ENCODE measurements at regions of chr12 and their contacts with region 1.

Region 1: GRCh38 chr12:104462931-104463339 is 6.2 kb downstream of the CHST11 start:
- DNase-seq: peak in 1 of 2 donors; percentile 80
- ATAC-seq: peak; percentile 41 to 67 (median 48)
- H3K4me3 ChIP-seq: no peak overlapping the region
- H3K4me3 Mint-ChIP-seq: peak overlapping the region; percentile 78
- H3K27ac ChIP-seq: peak overlapping the region; percentile 64
- H3K27ac Mint-ChIP-seq: peak overlapping the region; percentile 91 to 93
- H3K4me1 ChIP-seq: peaks cover 70% of the 10 kb centered on the region
- H3K4me1 Mint-ChIP-seq: peaks cover 82% of the 10 kb centered on the region in 2 donors
- H3K27me3 ChIP-seq: no peaks in the 10 kb centered on the region
- H3K27me3 Mint-ChIP-seq: no peaks in the 10 kb centered on the region
- CTCF ChIP-seq: no peak

Region 2: DNA sequence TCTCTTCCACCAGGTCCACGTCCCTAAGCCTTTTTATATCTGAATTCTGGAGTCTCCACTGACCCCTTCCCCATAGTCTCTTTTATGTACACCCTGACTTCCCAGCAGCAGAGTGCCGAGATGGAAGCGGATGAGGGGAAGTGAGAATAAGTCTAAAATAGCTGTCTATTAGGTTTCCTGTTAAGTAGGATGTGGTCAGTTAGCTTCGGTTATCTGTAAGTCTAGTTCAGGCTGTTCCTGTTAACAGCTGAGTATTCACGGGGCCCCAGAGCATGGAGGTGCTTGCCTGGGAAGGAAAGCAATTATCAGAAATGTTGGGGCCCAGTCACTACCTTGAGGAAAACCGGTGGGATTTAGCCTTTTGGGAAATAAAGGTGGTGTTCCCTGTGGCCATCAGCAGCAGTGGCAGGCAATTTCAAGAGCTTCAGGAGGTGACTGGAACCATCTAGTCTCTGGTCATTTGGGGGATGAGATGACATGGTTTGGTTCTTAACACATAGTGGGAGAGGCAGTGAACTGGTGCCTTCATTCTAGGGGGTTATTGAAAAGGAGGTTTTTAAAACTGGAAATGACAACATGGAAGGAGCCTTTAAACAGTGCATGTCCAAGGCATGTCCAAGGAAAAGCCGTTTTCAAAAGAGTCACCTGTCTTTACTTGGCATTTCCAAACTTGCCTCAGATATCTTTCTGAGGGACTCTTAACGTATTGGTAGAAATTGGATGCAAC is 15.6 kb after region 1 on chr12:
- intact Hi-C with region 1: loop called (anchors 2 kb)
- DNase-seq: peak; percentile 35 to 75
- ATAC-seq: peak; percentile 83 to 93 (median 91)
- H3K4me3 ChIP-seq: peak overlapping the region; percentile 23
- H3K4me3 Mint-ChIP-seq: peak overlapping the region; percentile 92
- H3K27ac ChIP-seq: peak overlapping the region; percentile 80
- H3K27ac Mint-ChIP-seq: peak overlapping the region; percentile 92 to 98
- H3K4me1 ChIP-seq: peaks cover 71% of the 10 kb centered on the region
- H3K4me1 Mint-ChIP-seq: peaks cover 86 to 87% of the 10 kb centered on the region in 2 donors
- H3K27me3 ChIP-seq: no peaks in the 10 kb centered on the region
- H3K27me3 Mint-ChIP-seq: no peaks in the 10 kb centered on the region
- CTCF ChIP-seq: no peak